ENCODE measurements at regions of chr19 and their contacts with region 1.

Region 1: DNA sequence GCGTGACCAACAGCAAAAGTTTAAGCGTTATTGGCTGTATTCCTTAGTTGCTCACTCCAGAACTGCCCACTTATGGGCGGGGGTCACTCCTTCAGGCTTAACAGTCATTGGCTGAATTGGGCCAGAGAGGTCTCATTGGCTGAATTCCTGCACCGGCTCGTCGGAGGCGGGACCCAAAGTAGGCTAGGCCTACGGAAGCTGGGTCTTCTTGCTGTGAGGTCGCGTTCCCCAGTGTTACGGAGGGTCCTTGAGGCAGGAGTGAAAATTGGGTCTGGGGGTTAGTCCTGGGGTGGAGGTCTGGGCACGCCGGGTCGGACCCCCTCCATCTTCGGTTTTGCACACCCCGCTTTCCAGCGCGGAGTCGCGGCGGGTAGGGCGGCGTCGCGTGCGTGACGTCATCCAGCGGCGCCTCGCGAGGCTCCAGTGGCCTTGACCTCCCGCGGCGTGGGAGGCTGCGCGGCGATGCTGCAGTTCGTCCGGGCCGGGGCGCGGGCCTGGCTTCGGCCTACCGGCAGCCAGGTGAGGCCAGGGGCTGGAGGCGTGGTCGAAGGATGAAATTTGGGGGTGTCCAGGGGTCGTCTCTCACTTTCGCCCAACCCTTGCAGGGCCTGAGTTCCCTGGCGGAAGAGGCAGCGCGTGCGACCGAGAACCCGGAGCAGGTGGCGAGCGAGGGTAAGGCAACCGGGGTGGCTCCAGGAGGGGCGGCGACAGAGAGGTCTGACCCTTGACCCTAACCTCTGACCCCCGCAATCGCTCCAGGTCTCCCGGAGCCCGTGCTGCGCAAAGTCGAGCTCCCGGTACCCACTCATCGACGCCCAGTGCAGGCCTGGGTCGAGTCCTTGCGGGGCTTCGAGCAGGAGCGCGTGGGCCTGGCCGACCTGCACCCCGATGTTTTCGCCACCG is at the start of gene MRPL4:
- DNase-seq: peak; percentile 93 to 98
- ATAC-seq: peak; percentile 95 to 99 (median 95)
- H3K4me3 ChIP-seq: peak within 1 kb of the TSS; percentile 96
- H3K4me3 Mint-ChIP-seq: peak within 1 kb of the TSS; percentile 95
- H3K27ac ChIP-seq: peak within 1 kb of the TSS; percentile 75
- H3K27ac Mint-ChIP-seq: peak within 1 kb of the TSS; percentile 90 to 93
- H3K4me1 ChIP-seq: peaks cover 20% of the 10 kb centered on the region
- H3K4me1 Mint-ChIP-seq: peaks cover 0 to 33% of the 10 kb centered on the region in 2 donors
- H3K27me3 ChIP-seq: no peaks in the 10 kb centered on the region
- H3K27me3 Mint-ChIP-seq: no peaks in the 10 kb centered on the region
- CTCF ChIP-seq: no peak
- total RNA-seq, gene MRPL4: 34.5 to 41.6 (median 40.2) TPM

Region 2: DNA sequence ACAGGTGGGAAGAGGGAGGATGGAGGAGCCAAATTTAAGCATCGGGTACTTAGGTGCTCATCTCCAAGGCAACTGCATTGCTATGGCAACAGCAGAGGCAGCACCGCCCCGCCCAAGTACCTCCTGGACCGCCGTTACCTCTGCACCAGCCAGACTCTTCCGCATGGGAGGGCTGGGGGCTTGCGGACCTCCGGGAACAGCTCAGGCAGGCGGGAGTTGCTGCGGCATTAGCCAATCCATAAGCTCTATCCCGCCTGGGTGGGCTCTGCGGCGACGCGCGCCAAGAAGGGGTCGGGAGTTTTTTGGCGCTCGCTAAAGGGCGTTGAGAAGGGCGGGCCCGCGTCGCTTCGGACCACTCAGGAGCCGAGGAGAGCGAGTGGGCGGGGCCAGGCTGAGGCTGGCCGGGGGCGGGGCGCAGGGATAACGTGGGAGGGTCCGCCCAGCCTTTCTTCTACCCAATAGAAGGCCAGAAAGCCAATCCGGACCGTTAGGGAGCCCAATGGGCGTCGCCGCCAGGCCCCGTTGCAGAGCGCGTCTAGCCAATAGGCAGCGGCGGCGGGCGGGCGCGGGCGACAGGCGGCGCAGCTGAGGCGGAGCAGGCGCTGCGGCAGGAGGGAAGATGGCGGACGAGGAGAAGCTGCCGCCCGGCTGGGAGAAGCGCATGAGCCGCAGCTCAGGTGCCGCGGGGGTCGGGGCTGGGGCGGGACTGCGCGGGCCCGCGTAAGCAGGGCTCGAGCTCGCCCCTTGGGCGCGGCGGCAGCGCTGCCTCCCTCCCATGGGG is 417.1 kb before region 1 on chr19 and contains the start of gene PIN1:
- intact Hi-C with region 1: no loop called
- DNase-seq: peak; percentile 99
- ATAC-seq: peak; percentile 95 to 99 (median 96)
- H3K4me3 ChIP-seq: peak within 1 kb of the TSS; percentile 59
- H3K4me3 Mint-ChIP-seq: peak within 1 kb of the TSS; percentile 85
- H3K27ac ChIP-seq: peak within 1 kb of the TSS; percentile 70
- H3K27ac Mint-ChIP-seq: peak within 1 kb of the TSS; percentile 85 to 89
- H3K4me1 ChIP-seq: peaks cover 17% of the 10 kb centered on the region
- H3K4me1 Mint-ChIP-seq: peaks cover 12 to 22% of the 10 kb centered on the region in 2 donors
- H3K27me3 ChIP-seq: no peaks in the 10 kb centered on the region
- H3K27me3 Mint-ChIP-seq: no peaks in the 10 kb centered on the region
- CTCF ChIP-seq: peak; percentile 21
- total RNA-seq, gene PIN1: 68.3 to 82.6 (median 74.8) TPM

Region 3: DNA sequence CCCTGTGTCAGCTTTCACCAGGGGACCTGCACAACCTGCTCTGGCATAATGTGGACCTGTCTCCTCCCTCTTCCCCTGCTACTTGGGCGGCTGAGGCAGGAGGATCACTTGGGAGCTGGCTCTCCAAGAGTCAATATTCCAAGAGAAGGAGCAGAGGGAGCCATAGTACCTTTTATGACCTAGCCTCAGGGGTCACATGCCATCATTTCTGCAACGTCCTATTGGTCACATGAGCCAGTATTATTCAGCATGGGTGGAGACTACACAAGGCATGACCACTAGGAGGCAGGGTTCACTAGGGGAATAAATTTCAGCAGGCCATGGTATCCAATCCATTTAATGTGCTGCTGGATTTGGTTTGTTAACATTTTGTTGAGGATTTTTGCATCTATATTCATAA is 177.9 kb before region 1 on chr19:
- intact Hi-C with region 1: loop called (anchors 1 kb)
- DNase-seq: peak in 1 of 2 donors; percentile 81
- ATAC-seq: peak; percentile 71 to 99 (median 92)
- H3K4me3 ChIP-seq: no peak overlapping the region
- H3K4me3 Mint-ChIP-seq: no peak overlapping the region
- H3K27ac ChIP-seq: no peak overlapping the region
- H3K27ac Mint-ChIP-seq: peak overlapping the region in 1 of 2 donors; percentile 16
- H3K4me1 ChIP-seq: no peaks in the 10 kb centered on the region
- H3K4me1 Mint-ChIP-seq: no peaks in the 10 kb centered on the region
- H3K27me3 ChIP-seq: no peaks in the 10 kb centered on the region
- H3K27me3 Mint-ChIP-seq: peaks cover 0 to 4% of the 10 kb centered on the region in 2 donors
- CTCF ChIP-seq: peak; percentile 64

Region 4: DNA sequence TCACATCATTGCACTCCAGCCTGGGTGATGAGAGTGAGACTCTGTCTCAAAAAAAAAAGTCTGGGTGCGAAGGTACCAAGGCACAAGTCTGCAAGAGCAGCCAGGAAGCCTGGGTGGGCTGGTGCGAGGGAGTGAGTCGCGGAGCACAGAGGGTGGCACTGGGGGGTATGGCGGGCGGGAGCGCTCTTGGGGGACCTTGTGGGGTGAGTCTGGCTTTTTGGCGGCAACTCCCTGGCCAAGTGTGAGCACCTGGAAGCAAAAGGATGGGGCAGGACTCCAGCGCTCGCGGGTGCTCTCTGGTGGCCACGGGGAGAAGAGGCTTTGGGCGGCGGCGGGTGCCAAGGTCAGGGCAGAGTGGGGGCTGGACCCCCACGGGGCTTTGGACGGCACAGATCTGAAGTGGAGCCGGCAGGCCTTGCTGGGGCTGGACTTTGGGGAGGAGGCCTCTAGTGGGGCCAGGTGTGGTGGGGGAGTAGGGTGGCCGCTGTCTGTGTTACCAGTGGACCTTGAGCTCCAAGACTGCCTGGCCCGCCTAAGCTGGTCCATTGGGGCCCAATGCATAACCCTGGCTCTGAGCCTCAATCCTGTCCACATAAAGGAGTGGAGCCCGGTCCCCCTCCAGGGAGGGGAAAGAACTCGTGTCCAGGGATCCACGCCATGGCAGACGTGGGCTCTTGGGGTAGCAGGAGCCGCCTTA is 139.0 kb before region 1 on chr19:
- intact Hi-C with region 1: loop called (anchors 5 kb)
- DNase-seq: peak; percentile 68 to 85
- ATAC-seq: peak; percentile 61 to 77 (median 62)
- H3K4me3 ChIP-seq: no peak overlapping the region
- H3K4me3 Mint-ChIP-seq: peak overlapping the region; percentile 88
- H3K27ac ChIP-seq: peak overlapping the region; percentile 93
- H3K27ac Mint-ChIP-seq: peak overlapping the region; percentile 95 to 98
- H3K4me1 ChIP-seq: peaks cover 91% of the 10 kb centered on the region
- H3K4me1 Mint-ChIP-seq: peaks cover 43 to 74% of the 10 kb centered on the region in 2 donors
- H3K27me3 ChIP-seq: no peaks in the 10 kb centered on the region
- H3K27me3 Mint-ChIP-seq: no peaks in the 10 kb centered on the region
- CTCF ChIP-seq: peak; percentile 71

Region 5: GRCh38 chr19:10209315-10209714 is 42.7 kb before region 1 on chr19:
- intact Hi-C with region 1: no loop called
- DNase-seq: no peak
- ATAC-seq: no peak
- H3K4me3 ChIP-seq: no peak overlapping the region
- H3K4me3 Mint-ChIP-seq: no peak overlapping the region
- H3K27ac ChIP-seq: no peak overlapping the region
- H3K27ac Mint-ChIP-seq: no peak overlapping the region
- H3K4me1 ChIP-seq: no peaks in the 10 kb centered on the region
- H3K4me1 Mint-ChIP-seq: no peaks in the 10 kb centered on the region
- H3K27me3 ChIP-seq: no peaks in the 10 kb centered on the region
- H3K27me3 Mint-ChIP-seq: no peaks in the 10 kb centered on the region
- CTCF ChIP-seq: no peak

Region 6: GRCh38 chr19:10230861-10231611 is 21.0 kb before region 1 on chr19 and contains the start of gene S1PR2:
- intact Hi-C with region 1: loop called (anchors 1 kb)
- DNase-seq: peak; percentile 68 to 88
- ATAC-seq: peak; percentile 49 to 66 (median 55)
- H3K4me3 ChIP-seq: peak within 1 kb of the TSS; percentile 88
- H3K4me3 Mint-ChIP-seq: peak within 1 kb of the TSS; percentile 92
- H3K27ac ChIP-seq: peak within 1 kb of the TSS; percentile 86
- H3K27ac Mint-ChIP-seq: peak within 1 kb of the TSS; percentile 86 to 88
- H3K4me1 ChIP-seq: peaks cover 45% of the 10 kb centered on the region
- H3K4me1 Mint-ChIP-seq: peaks cover 9 to 18% of the 10 kb centered on the region in 2 donors
- H3K27me3 ChIP-seq: no peaks in the 10 kb centered on the region
- H3K27me3 Mint-ChIP-seq: no peaks in the 10 kb centered on the region
- CTCF ChIP-seq: no peak
- total RNA-seq, gene S1PR2: 6.8 to 12.6 (median 9.5) TPM

Region 7: GRCh38 chr19:10292206-10292788 is 40.3 kb after region 1 on chr19:
- intact Hi-C with region 1: no loop called
- DNase-seq: peak; percentile 75 to 77
- ATAC-seq: peak; percentile 52 to 70 (median 59)
- H3K4me3 ChIP-seq: peak overlapping the region; percentile 15
- H3K4me3 Mint-ChIP-seq: peak overlapping the region; percentile 86
- H3K27ac ChIP-seq: no peak overlapping the region
- H3K27ac Mint-ChIP-seq: peak overlapping the region; percentile 63 to 71
- H3K4me1 ChIP-seq: peaks cover 90% of the 10 kb centered on the region
- H3K4me1 Mint-ChIP-seq: peaks cover 49 to 68% of the 10 kb centered on the region in 2 donors
- H3K27me3 ChIP-seq: peaks cover 63% of the 10 kb centered on the region
- H3K27me3 Mint-ChIP-seq: peaks cover 7 to 40% of the 10 kb centered on the region in 2 donors
- CTCF ChIP-seq: no peak

Region 8: DNA sequence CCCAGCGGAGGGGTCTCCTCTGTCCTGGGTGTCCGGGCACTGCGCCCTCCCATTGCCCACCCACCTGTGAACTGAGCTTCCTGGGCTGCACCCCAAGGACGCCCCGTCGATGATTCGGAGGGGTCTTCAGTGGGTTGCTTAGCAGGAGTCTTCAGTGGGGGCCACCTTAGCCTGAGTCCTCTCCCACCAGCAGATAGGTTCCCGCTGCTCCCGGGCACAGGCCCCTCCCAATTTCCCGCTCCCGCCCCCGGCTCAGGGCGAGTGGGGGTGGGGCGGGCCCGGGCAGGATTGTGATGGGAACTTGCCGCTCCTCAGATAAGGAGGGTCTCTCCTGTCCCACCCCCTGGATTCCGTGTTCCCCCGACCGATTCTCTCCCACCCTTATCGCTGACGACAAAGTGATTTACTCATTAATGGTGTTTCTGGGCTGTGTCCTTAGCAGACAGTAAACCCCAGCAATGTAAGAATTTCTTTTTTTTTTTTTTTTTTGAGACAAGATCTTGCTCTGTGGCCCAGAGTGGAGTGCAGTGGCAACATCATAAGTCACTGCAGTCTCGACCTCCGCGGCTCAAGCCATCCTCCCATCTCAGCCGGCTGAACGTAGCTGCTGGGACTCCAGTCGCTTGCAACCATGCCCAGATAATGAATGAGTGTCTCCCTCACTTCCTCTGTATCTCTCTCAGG is 265.9 kb after region 1 on chr19:
- intact Hi-C with region 1: no loop called
- DNase-seq: peak; percentile 61 to 74
- ATAC-seq: peak; percentile 20 to 33 (median 29)
- H3K4me3 ChIP-seq: peak overlapping the region; percentile 97
- H3K4me3 Mint-ChIP-seq: peak overlapping the region; percentile 81
- H3K27ac ChIP-seq: peak overlapping the region; percentile 89
- H3K27ac Mint-ChIP-seq: peak overlapping the region; percentile 86 to 91
- H3K4me1 ChIP-seq: peaks cover 80% of the 10 kb centered on the region
- H3K4me1 Mint-ChIP-seq: peaks cover 60 to 67% of the 10 kb centered on the region in 2 donors
- H3K27me3 ChIP-seq: peaks cover 2% of the 10 kb centered on the region
- H3K27me3 Mint-ChIP-seq: peaks cover 0 to 3% of the 10 kb centered on the region in 2 donors
- CTCF ChIP-seq: no peak

Measured in natural killer cell (primary cell).